ENCODE measurements at regions of chr15 and their contacts with region 1.

Region 1: DNA sequence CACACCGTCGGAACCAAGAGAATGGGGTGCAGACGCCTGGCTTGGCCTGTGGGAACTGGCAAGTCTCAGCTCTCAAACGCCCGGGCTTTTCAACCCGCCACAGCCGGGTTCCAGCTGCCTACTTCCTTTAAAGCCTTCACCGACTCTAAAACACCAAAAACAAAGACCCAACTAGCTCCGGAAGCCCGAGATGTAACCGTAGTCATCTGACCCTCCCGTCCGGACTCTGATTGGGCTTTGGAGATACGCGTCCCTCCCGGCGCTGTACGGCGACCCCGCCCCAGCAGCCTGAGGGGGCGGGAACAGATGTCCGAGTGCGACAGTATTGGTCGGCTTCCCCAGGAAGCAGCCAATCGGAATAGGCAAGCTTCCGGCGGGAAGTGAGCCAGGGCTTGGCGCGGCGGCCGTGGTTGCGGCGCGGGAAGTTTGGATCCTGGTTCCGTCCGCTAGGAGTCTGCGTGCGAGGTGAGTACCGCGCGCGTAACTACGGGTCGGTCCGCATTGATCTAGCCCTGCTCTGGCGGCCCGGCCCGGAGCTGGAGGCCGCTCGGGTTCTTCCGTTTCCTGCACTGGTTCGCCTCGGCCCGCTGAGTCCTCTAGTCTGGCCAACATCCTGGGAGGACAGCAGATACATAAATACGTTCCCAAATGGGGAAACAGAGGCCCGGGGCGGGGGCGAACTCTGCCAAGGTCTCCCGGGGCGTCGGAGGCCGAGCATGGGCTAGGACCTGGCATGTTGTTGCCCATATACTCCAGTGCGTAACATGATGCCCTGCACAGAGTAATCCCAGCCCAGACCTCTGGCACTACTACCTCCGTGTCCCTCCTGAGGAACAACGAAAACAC is at the start of gene BLM:
- DNase-seq: peak; percentile 96
- ATAC-seq: peak; percentile 100
- H3K4me3 Mint-ChIP-seq: peak within 1 kb of the TSS; percentile 80
- H3K27ac Mint-ChIP-seq: peak within 1 kb of the TSS; percentile 83
- H3K4me1 Mint-ChIP-seq: peaks cover 17% of the 10 kb centered on the region
- H3K27me3 Mint-ChIP-seq: no peaks in the 10 kb centered on the region
- total RNA-seq, gene BLM: 59.5 to 73.7 TPM

Region 2: GRCh38 chr15:90265271-90266060 is 451.7 kb before region 1 on chr15 and contains the start of gene NGRN:
- CTCF ChIA-PET with region 1: interaction called, 3 read pairs
- POLR2A ChIA-PET with region 1: no interaction called
- intact Hi-C with region 1: loop called in 1 of 2 experiments (anchors 1 kb)
- DNase-seq: peak; percentile 95
- ATAC-seq: peak; percentile 87
- H3K4me3 Mint-ChIP-seq: peak within 1 kb of the TSS; percentile 98
- H3K27ac Mint-ChIP-seq: peak within 1 kb of the TSS; percentile 99
- H3K4me1 Mint-ChIP-seq: peaks cover 37% of the 10 kb centered on the region
- H3K27me3 Mint-ChIP-seq: no peaks in the 10 kb centered on the region
- total RNA-seq, gene NGRN: 22.0 to 23.9 TPM

Region 3: DNA sequence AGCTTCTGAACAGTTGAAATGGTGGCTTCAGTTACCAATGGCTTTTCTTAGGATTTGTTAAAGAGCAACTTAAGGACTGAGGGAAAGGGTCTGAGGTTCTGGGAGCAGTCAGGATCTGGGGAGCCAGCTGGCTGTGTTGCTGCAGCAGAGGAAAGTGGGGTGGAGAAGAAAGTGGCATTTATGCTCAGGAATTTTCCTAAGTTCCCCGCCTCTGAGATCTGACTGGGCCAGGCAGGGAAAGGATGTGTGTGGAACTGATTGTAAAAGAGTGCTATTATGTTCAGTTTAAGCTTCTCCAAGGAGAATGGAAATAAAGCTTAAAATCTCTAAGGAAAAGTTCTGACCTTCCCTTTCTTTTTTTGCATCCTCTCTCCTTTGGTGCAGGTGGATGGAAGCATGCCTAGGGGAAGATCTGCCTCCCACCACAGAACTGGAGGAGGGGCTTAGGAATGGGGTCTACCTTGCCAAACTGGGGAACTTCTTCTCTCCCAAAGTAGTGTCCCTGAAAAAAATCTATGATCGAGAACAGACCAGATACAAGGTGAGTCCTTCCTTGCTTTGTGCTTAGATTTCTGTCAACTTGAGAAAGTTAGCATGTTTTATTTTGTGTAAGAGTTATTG is 291.4 kb before region 1 on chr15:
- CTCF ChIA-PET with region 1: no interaction called
- POLR2A ChIA-PET with region 1: no interaction called
- intact Hi-C with region 1: no loop called
- DNase-seq: no peak
- ATAC-seq: no peak
- H3K4me3 Mint-ChIP-seq: no peak overlapping the region
- H3K27ac Mint-ChIP-seq: no peak overlapping the region
- H3K4me1 Mint-ChIP-seq: peaks cover 35% of the 10 kb centered on the region
- H3K27me3 Mint-ChIP-seq: no peaks in the 10 kb centered on the region

Region 4: GRCh38 chr15:90529371-90530249 is 187.6 kb before region 1 on chr15 and contains the start of gene CRTC3:
- CTCF ChIA-PET with region 1: no interaction called
- POLR2A ChIA-PET with region 1: no interaction called
- intact Hi-C with region 1: loop called in 1 of 2 experiments (anchors 1 kb)
- DNase-seq: peak; percentile 72
- ATAC-seq: peak; percentile 88
- H3K4me3 Mint-ChIP-seq: peak within 1 kb of the TSS; percentile 93
- H3K27ac Mint-ChIP-seq: peak within 1 kb of the TSS; percentile 92
- H3K4me1 Mint-ChIP-seq: peaks cover 42% of the 10 kb centered on the region
- H3K27me3 Mint-ChIP-seq: no peaks in the 10 kb centered on the region
- total RNA-seq, gene CRTC3: 32.4 to 36.2 TPM

Region 5: DNA sequence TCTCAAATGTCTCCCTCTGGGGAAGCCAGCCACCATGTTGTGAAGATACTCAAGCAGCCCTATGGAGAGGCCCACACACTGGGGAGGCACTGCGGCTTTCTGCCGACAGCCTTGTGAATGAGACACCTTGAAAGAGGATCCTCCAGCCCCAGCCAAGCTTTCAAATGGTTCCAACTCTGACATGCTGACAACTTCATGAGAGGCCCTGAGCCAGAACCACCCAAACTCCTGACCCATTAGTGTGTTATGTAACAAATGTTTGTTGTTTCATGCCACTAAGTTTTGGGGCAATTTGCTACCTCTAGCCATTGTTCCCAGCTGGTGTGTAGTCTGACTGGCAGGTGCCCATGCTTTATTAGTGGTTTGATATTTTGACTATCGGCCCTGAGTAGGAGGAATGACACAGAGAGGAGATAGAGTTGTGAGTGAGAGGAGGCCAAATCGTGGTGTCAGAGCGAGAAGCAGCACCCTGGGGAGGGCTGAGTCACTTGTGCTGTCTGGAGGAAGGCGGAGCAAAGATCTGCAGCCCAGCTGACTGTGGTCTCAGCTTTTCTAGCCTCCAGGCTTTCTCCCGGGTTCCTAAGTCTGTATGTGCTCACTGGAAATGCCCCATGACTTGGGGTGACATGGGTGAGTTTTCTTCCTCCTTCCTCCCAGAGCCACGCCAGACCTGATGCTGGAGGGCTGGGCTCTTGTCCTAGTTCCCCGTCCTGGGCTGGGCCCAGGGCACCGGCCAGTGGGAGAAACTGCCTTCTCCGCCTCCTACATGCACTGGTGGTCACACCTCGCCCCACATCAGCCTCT is 56.8 kb before region 1 on chr15:
- CTCF ChIA-PET with region 1: no interaction called
- POLR2A ChIA-PET with region 1: interaction called, 3 read pairs
- intact Hi-C with region 1: loop called in 1 of 2 experiments (anchors 1 kb)
- DNase-seq: peak; percentile 89
- ATAC-seq: peak; percentile 96
- H3K4me3 Mint-ChIP-seq: peak overlapping the region; percentile 52
- H3K27ac Mint-ChIP-seq: peak overlapping the region; percentile 43
- H3K4me1 Mint-ChIP-seq: peaks cover 73% of the 10 kb centered on the region
- H3K27me3 Mint-ChIP-seq: peaks cover 47% of the 10 kb centered on the region

Region 6: DNA sequence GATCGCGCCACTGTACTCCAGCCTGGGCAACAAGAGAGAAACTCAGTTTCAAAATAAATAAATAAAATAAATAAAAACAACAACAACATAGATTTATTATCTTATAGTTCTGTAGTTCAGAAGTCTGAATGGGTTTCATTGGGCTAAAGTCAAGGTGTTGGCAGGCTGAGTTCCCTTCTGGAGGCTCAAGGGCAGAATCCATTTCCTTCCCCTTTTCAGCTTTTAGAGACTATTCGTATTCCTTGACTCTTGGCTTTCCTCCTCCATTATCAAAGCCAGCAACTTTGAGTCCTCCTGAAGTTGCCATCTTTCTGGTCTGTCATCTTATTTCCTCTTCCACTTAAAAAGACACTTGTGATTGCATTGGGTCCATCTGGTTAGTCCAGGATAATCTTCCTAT is 12.1 kb after region 1 on chr15:
- CTCF ChIA-PET with region 1: interaction called, 14 read pairs
- POLR2A ChIA-PET with region 1: interaction called, 3 read pairs
- intact Hi-C with region 1: no loop called
- DNase-seq: no peak
- ATAC-seq: no peak
- H3K4me3 Mint-ChIP-seq: no peak overlapping the region
- H3K27ac Mint-ChIP-seq: no peak overlapping the region
- H3K4me1 Mint-ChIP-seq: peaks cover 2% of the 10 kb centered on the region
- H3K27me3 Mint-ChIP-seq: no peaks in the 10 kb centered on the region

Region 7: DNA sequence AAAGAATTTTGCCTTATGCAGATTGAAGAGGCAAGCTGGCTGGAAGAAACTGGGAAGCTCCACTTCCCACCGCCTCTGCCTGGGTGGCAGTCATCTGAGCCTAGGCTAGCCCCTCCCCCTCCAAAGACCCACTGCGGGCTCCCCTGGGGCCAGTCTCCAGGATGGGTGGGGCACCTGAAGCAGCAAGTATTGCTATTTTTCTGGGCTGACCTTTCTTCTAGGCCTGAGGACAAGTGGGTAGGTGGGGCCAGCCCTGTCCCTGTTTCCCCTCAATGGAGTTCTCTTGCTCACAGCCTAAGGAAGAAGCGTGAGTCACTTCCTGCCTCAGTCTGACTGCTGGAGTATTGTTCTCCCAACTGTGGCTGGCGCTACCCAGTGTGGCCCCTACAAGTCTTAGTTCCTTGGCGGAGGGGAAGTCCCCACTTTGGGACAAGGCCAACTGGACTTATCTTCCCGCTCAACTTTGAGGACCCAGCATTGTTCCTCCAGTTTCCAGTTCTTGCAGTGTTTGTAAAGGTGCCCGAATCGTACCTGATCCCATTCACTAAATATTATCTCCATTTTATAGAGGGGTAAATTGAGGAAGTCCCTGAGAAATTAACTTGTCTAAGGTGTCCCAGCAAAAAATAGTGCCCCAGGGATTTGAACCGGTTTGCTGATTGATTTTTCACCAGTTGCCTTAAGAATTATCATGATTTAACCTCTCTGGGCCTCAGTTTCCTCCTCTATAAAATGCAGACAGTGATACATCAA is 152.6 kb after region 1 on chr15:
- CTCF ChIA-PET with region 1: interaction called, 3 read pairs
- POLR2A ChIA-PET with region 1: interaction called, 4 read pairs
- intact Hi-C with region 1: loop called in 1 of 2 experiments (anchors 2 kb)
- DNase-seq: peak; percentile 78
- ATAC-seq: peak; percentile 65
- H3K4me3 Mint-ChIP-seq: peak overlapping the region; percentile 90
- H3K27ac Mint-ChIP-seq: peak overlapping the region; percentile 98
- H3K4me1 Mint-ChIP-seq: peaks cover 59% of the 10 kb centered on the region
- H3K27me3 Mint-ChIP-seq: peaks cover 5% of the 10 kb centered on the region

Region 8: GRCh38 chr15:90902040-90902839 is 185.0 kb after region 1 on chr15:
- CTCF ChIA-PET with region 1: interaction called, 3 read pairs
- POLR2A ChIA-PET with region 1: interaction called, 9 read pairs
- intact Hi-C with region 1: loop called in 1 of 2 experiments (anchors 1 kb)
- DNase-seq: peak; percentile 83
- ATAC-seq: peak; percentile 79
- H3K4me3 Mint-ChIP-seq: peak overlapping the region; percentile 81
- H3K27ac Mint-ChIP-seq: peak overlapping the region; percentile 88
- H3K4me1 Mint-ChIP-seq: peaks cover 16% of the 10 kb centered on the region
- H3K27me3 Mint-ChIP-seq: no peaks in the 10 kb centered on the region

Measured in activated CD4-positive, alpha-beta T cell treated with anti-CD3 and anti-CD28 coated beads for 36 hours (primary cell).